MCF 10A (cell line): ENCODE measurements at regions of chr3 and their contacts with region 1.

Region 1: DNA sequence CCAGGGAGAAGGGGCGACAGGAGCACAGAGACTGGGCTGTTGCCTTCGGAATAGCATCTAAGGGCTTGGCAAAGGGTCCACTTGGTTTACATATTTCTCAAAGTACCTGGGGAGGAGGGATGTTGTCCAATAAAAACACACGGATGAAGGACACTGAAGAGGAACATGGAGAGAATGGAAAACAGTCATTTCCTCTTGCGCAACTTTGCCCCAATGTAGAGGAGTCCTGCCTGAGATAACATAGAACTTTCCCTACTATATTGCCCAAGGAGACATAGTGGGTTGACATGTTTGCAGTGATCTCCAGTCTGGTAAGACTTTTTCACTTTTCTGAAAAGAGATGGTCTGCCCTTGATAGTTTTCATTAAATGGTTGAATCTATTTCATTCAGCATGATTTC is 468.8 kb upstream of the SUCLG2 start:
- DNase-seq: peak; percentile 38
- H3K4me3 Mint-ChIP-seq: no peak overlapping the region
- H3K27ac Mint-ChIP-seq: no peak overlapping the region
- H3K4me1 Mint-ChIP-seq: no peaks in the 10 kb centered on the region
- H3K27me3 Mint-ChIP-seq: no peaks in the 10 kb centered on the region
- CTCF ChIP-seq: no peak

Region 2: GRCh38 chr3:68904064-68904463 is 780.8 kb after region 1 on chr3:
- CTCF ChIA-PET with region 1: interaction called, 10 read pairs
- POLR2A ChIA-PET with region 1: no interaction called
- intact Hi-C with region 1: no loop called
- DNase-seq: no peak
- H3K4me3 Mint-ChIP-seq: no peak overlapping the region
- H3K27ac Mint-ChIP-seq: no peak overlapping the region
- H3K4me1 Mint-ChIP-seq: no peaks in the 10 kb centered on the region
- H3K27me3 Mint-ChIP-seq: peaks cover 74% of the 10 kb centered on the region
- CTCF ChIP-seq: no peak